ENCODE measurements at regions of chr20 and their contacts with region 1.

Region 1: DNA sequence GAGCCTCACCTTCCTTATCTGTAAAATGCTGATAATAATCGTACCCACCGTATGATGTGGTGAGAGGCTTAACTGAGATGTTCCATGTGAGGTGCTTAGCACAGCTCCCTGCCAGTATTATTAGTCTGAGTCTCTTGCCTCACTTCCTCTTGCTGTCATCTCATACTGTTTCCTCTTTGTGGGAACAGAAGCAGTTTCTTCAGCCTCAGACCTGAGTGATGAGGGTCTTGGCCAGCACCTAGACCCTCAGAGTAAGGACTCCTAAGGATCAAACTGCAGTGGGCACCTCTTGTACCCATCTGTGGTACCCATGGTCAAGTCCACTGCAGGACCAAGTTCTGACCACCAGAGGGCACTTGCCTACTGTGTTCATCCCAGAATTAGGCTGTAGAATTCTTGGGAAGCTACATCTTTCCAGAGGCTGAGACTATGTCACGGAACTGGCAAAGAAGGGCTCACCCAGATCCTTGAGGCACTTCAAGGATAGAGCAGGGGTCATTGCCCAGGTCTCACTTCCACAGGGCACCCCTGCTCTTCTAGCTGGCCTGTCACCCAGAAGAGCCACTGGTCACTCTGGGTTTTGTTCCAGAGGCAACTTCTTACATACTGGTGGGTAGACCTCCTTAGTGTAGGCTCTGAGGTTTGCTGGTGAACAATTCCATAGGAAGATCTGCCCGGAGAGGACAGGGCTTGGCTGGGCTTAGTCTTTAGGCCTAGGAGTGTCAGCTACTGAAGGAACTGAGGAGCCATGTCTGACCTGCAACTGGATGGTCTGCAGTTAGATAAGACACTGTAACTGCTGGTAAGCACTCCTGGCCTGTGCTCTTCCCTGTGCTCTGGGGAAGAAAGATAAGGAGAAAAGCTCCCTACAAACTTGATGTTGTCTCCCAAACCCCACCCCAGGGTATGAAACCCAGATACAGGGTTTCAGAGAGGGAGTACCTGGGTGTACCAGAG is 20.6 kb upstream of the SGK2 start:
- DNase-seq: peak in 8 of 9 experiments; percentile 12 to 62 (median 50)
- ATAC-seq: peak; percentile 36
- H3K4me3 ChIP-seq: no peak overlapping the region
- H3K4me3 Mint-ChIP-seq: no peak overlapping the region
- H3K27ac ChIP-seq: no peak overlapping the region
- H3K27ac Mint-ChIP-seq: no peak overlapping the region
- H3K4me1 ChIP-seq: no peaks in the 10 kb centered on the region
- H3K4me1 Mint-ChIP-seq: no peaks in the 10 kb centered on the region
- H3K27me3 ChIP-seq: no peaks in the 10 kb centered on the region
- H3K27me3 Mint-ChIP-seq: no peaks in the 10 kb centered on the region
- CTCF ChIP-seq: peak; percentile 64

Region 2: GRCh38 chr20:43525021-43525420 is 13.2 kb before region 1 on chr20:
- CTCF ChIA-PET with region 1: interaction called, 17 read pairs
- POLR2A ChIA-PET with region 1: no interaction called
- intact Hi-C with region 1: no loop called
- DNase-seq: no peak
- ATAC-seq: no peak
- H3K4me3 ChIP-seq: no peak overlapping the region
- H3K4me3 Mint-ChIP-seq: no peak overlapping the region
- H3K27ac ChIP-seq: no peak overlapping the region
- H3K27ac Mint-ChIP-seq: no peak overlapping the region
- H3K4me1 ChIP-seq: no peaks in the 10 kb centered on the region
- H3K4me1 Mint-ChIP-seq: no peaks in the 10 kb centered on the region
- H3K27me3 ChIP-seq: no peaks in the 10 kb centered on the region
- H3K27me3 Mint-ChIP-seq: peaks cover 4% of the 10 kb centered on the region
- CTCF ChIP-seq: no peak

Region 3: DNA sequence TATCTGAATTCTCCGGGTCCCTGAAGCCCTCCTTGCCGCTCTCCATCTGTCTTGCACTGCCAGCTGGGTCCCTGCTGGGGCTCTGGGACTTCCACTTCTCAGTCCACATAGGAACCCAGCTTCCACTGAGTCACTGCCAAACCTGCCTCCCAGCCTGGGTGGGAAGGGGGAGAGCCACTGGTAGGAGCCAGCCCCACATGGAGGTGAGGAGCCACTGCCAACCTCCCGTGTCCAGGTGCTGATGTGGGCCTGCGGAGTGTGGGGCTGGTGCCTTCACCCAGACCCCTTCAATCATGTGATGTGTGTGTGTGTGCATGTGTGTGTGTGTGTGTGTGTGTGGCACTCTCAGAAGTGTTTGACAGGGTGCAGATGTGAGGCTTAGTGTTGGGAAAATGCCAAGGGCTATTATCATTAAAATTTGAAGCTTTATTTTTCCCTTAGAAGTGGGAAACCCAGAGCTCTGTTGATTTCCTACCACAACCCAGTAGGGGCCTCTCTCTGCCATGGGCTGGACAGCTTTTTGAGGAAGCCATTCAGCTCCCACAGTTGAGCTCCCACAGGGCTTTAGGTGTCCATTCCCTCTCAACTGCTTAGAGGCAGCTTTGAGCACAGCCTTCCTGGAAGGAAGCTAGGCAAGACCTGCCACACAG is 11.3 kb after region 1 on chr20:
- CTCF ChIA-PET with region 1: interaction called, 13 read pairs
- POLR2A ChIA-PET with region 1: no interaction called
- intact Hi-C with region 1: no loop called
- DNase-seq: no peak
- ATAC-seq: no peak
- H3K4me3 ChIP-seq: no peak overlapping the region
- H3K4me3 Mint-ChIP-seq: no peak overlapping the region
- H3K27ac ChIP-seq: no peak overlapping the region
- H3K27ac Mint-ChIP-seq: no peak overlapping the region
- H3K4me1 ChIP-seq: no peaks in the 10 kb centered on the region
- H3K4me1 Mint-ChIP-seq: no peaks in the 10 kb centered on the region
- H3K27me3 ChIP-seq: no peaks in the 10 kb centered on the region
- H3K27me3 Mint-ChIP-seq: no peaks in the 10 kb centered on the region
- CTCF ChIP-seq: no peak

Region 4: DNA sequence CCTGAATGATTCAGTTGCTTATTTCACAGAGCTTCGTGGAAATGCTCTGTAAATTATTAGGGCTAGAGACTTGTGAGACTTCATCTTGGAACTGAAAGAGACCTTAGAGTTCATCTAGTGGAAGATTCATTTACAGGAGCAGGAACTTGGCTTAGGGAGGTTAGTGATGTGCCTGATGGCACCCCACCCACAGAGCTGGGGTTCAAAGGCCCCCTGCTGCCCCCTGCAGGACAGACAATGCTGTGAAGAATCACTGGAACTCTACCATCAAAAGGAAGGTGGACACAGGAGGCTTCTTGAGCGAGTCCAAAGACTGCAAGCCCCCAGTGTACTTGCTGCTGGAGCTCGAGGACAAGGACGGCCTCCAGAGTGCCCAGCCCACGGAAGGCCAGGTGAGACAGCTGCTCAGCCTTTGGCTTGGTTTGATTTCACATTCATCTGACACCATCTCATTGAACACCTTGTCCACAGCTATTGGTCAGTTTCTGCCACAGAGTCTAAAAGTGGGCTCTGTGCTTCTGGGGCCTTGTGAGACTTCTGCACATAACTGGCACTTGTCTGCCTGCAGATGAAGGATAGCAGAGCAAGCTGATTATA is 153.8 kb after region 1 on chr20:
- CTCF ChIA-PET with region 1: interaction called, 20 read pairs
- POLR2A ChIA-PET with region 1: no interaction called
- intact Hi-C with region 1: loop called in 1 of 2 experiments (anchors 2 kb)
- DNase-seq: peak; percentile 19 to 61 (median 54)
- ATAC-seq: peak; percentile 54
- H3K4me3 ChIP-seq: no peak overlapping the region
- H3K4me3 Mint-ChIP-seq: no peak overlapping the region
- H3K27ac ChIP-seq: no peak overlapping the region
- H3K27ac Mint-ChIP-seq: no peak overlapping the region
- H3K4me1 ChIP-seq: no peaks in the 10 kb centered on the region
- H3K4me1 Mint-ChIP-seq: peaks cover 3% of the 10 kb centered on the region
- H3K27me3 ChIP-seq: no peaks in the 10 kb centered on the region
- H3K27me3 Mint-ChIP-seq: no peaks in the 10 kb centered on the region
- CTCF ChIP-seq: peak; percentile 47

Region 5: GRCh38 chr20:43840382-43841070 is 302.3 kb after region 1 on chr20:
- CTCF ChIA-PET with region 1: interaction called, 3 read pairs
- POLR2A ChIA-PET with region 1: no interaction called
- intact Hi-C with region 1: loop called in 1 of 2 experiments (anchors 10 kb)
- DNase-seq: peak in 8 of 9 experiments; percentile 7 to 67 (median 46)
- ATAC-seq: peak; percentile 74
- H3K4me3 ChIP-seq: no peak overlapping the region
- H3K4me3 Mint-ChIP-seq: no peak overlapping the region
- H3K27ac ChIP-seq: no peak overlapping the region
- H3K27ac Mint-ChIP-seq: no peak overlapping the region
- H3K4me1 ChIP-seq: peaks cover 16% of the 10 kb centered on the region
- H3K4me1 Mint-ChIP-seq: peaks cover 38% of the 10 kb centered on the region
- H3K27me3 ChIP-seq: no peaks in the 10 kb centered on the region
- H3K27me3 Mint-ChIP-seq: no peaks in the 10 kb centered on the region
- CTCF ChIP-seq: peak; percentile 23

Region 6: GRCh38 chr20:44080646-44081267 is 542.6 kb after region 1 on chr20:
- CTCF ChIA-PET with region 1: interaction called, 13 read pairs
- POLR2A ChIA-PET with region 1: no interaction called
- intact Hi-C with region 1: loop called in 1 of 2 experiments (anchors 5 kb)
- DNase-seq: peak; percentile 61 to 88 (median 79)
- ATAC-seq: peak; percentile 99
- H3K4me3 ChIP-seq: no peak overlapping the region
- H3K4me3 Mint-ChIP-seq: no peak overlapping the region
- H3K27ac ChIP-seq: no peak overlapping the region
- H3K27ac Mint-ChIP-seq: peak overlapping the region; percentile 2
- H3K4me1 ChIP-seq: peaks cover 7% of the 10 kb centered on the region
- H3K4me1 Mint-ChIP-seq: peaks cover 21% of the 10 kb centered on the region
- H3K27me3 ChIP-seq: no peaks in the 10 kb centered on the region
- H3K27me3 Mint-ChIP-seq: no peaks in the 10 kb centered on the region
- CTCF ChIP-seq: peak; percentile 98

Region 7: DNA sequence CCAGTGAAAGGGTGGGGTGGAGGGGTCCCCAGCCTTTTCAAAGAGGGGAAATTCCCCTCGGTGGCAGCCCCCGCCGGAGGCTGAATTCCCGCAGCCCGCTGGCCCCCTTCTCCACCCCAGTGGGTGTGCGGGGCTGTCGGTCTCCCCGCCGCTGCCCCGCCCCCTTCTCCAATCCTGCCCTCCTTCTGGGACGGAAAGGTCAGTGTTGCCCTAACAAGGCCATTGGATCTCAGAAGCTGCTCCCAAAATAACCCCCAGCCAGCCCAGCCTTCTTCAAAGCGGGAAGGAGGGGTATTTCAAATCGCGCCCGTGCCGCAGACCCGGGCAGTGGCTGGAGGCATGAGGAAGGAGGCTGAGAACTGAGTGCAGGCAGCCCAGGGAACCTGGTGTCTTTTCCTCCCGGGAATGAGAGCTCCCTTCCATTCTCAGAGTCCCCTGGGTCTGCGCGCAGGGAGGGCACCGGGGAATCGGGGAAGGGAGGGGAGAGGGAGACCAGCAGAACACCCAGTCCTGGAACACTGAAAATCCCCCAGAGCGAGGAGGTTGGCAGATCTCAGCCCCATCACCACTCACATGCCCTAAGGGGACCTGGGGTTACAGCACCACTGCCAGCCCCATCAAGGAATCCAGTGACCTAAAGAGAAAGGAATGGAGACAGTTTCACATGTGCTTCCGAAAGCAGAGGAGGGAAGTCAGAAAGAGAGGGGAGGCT is 649.0 kb after region 1 on chr20 and contains the start of gene JPH2:
- CTCF ChIA-PET with region 1: interaction called, 3 read pairs
- POLR2A ChIA-PET with region 1: no interaction called
- intact Hi-C with region 1: loop called in 1 of 2 experiments (anchors 1 kb)
- DNase-seq: no peak
- ATAC-seq: peak; percentile 11
- H3K4me3 ChIP-seq: peak within 1 kb of the TSS in 1 of 2 experiments; percentile 29
- H3K4me3 Mint-ChIP-seq: peak within 1 kb of the TSS; percentile 16
- H3K27ac ChIP-seq: no peak within 1 kb of the TSS
- H3K27ac Mint-ChIP-seq: no peak within 1 kb of the TSS
- H3K4me1 ChIP-seq: peaks cover 16% of the 10 kb centered on the region
- H3K4me1 Mint-ChIP-seq: peaks cover 9% of the 10 kb centered on the region
- H3K27me3 ChIP-seq: peaks cover 19 to 23% of the 10 kb centered on the region in 2 experiments
- H3K27me3 Mint-ChIP-seq: peaks cover 49% of the 10 kb centered on the region
- CTCF ChIP-seq: no peak
- total RNA-seq, gene JPH2: not detected